ENCODE measurements at regions of chr3 and their contacts with region 1.

Region 1: DNA sequence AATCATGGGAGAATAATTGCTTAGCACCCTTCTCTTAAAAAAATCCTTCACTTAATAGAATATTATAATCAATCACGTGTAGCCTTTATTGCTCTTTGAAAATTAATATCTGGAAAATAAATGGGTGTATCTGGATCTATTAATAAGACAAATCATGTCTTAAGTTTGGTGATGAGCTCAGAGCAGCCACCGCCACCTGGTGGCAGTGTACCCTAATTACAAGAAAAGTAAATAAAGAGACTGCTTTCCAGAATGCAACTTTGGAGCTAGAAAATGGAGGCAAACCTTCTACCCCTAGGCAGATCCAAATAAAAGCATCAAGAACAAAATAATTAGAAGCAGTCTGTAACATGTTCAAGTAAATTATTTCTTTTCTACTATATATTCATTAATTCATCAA is 43.5 kb downstream of the EPHB1 start:
- DNase-seq: no peak
- ATAC-seq: no peak
- H3K4me3 Mint-ChIP-seq: no peak overlapping the region
- H3K27ac Mint-ChIP-seq: no peak overlapping the region
- H3K4me1 Mint-ChIP-seq: no peaks in the 10 kb centered on the region
- H3K27me3 Mint-ChIP-seq: peaks cover 7% of the 10 kb centered on the region
- CTCF ChIP-seq: peak; percentile 58

Region 2: DNA sequence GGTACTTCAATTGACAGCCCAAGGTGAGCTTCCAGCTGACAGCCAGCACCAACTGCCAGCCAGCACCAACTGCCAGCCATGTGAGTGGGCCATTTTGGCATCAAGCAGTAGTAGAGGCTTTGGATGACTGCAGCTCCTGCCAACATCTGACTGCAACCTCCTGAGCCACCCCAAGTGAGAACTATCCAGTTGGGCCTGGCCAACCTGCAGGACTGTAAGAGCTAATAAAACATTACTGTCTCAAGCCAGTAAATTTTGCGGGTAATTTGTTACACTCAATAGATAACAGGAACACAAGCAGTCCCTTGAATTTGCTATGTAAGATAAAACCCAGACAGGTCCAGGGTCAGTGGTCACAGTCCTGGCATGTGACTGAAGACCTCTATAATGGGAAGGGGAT is 13.8 kb before region 1 on chr3:
- CTCF ChIA-PET with region 1: interaction called, 12 read pairs
- POLR2A ChIA-PET with region 1: no interaction called
- DNase-seq: no peak
- ATAC-seq: no peak
- H3K4me3 Mint-ChIP-seq: no peak overlapping the region
- H3K27ac Mint-ChIP-seq: no peak overlapping the region
- H3K4me1 Mint-ChIP-seq: no peaks in the 10 kb centered on the region
- H3K27me3 Mint-ChIP-seq: no peaks in the 10 kb centered on the region
- CTCF ChIP-seq: no peak

Region 3: GRCh38 chr3:134850761-134851160 is 12.2 kb after region 1 on chr3:
- CTCF ChIA-PET with region 1: interaction called, 15 read pairs
- POLR2A ChIA-PET with region 1: no interaction called
- DNase-seq: no peak
- ATAC-seq: no peak
- H3K4me3 Mint-ChIP-seq: no peak overlapping the region
- H3K27ac Mint-ChIP-seq: no peak overlapping the region
- H3K4me1 Mint-ChIP-seq: peaks cover 25% of the 10 kb centered on the region
- H3K27me3 Mint-ChIP-seq: no peaks in the 10 kb centered on the region
- CTCF ChIP-seq: no peak

Region 4: DNA sequence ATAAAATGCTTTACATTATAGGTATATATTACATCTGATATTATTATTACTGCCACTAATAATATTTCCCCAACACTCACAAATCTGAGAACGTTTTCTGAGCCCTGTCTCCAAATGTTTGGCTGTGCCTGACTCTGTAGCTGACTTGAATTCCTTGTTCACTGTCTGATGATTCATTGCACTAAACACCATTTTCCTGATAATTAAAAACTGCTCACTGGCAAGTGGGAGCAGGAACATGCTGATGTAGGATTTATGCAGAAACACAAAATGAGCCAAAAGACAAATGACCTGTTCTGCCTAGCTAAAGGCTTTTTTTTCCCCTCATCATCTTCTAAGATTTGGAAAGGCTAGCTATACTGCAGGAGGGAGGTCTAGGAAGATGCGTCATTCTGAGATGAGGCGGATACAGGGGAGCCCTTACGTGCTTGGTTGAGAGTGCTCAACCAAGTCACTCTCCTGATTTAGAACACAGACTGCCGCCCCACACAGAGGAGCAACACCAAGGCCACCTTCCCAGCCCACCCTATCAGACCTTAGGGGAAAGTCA is 337.2 kb after region 1 on chr3:
- CTCF ChIA-PET with region 1: no interaction called
- POLR2A ChIA-PET with region 1: no interaction called
- DNase-seq: no peak
- ATAC-seq: no peak
- H3K4me3 Mint-ChIP-seq: no peak overlapping the region
- H3K27ac Mint-ChIP-seq: no peak overlapping the region
- H3K4me1 Mint-ChIP-seq: peaks cover 20% of the 10 kb centered on the region
- H3K27me3 Mint-ChIP-seq: no peaks in the 10 kb centered on the region; the same call in 1 of the 2 replicates
- CTCF ChIP-seq: no peak

Measured in WTC11 (cell line).